K562 (cell line): ENCODE measurements at regions of chr1 and their contacts with region 1.

Region 1: GRCh38 chr1:201511941-201512539 is 5.1 kb upstream of the CSRP1 start:
- DNase-seq: peak in 1 of 4 experiments; percentile 37
- ATAC-seq: peak; percentile 16
- H3K4me3 ChIP-seq: no peak overlapping the region
- H3K27ac ChIP-seq: no peak overlapping the region
- H3K4me1 ChIP-seq: peaks cover 22 to 46% of the 10 kb centered on the region in 2 experiments
- H3K27me3 ChIP-seq: no peaks in the 10 kb centered on the region
- CTCF ChIP-seq: no peak
- EP300 ChIP-seq: no peak
- POLR2A ChIP-seq: no peak
- RAD21 ChIP-seq: no peak

Region 2: GRCh38 chr1:201170533-201171062 is 341.4 kb before region 1 on chr1:
- CTCF ChIA-PET with region 1: no interaction called
- POLR2A ChIA-PET with region 1: no interaction called
- in situ Hi-C with region 1: no loop called
- intact Hi-C with region 1: no loop called
- DNase-seq: peak; percentile 97 to 100 (median 100)
- ATAC-seq: peak; percentile 98
- H3K4me3 ChIP-seq: peak overlapping the region; percentile 53
- H3K27ac ChIP-seq: peak overlapping the region; percentile 72
- H3K4me1 ChIP-seq: peaks cover 15 to 32% of the 10 kb centered on the region in 2 experiments; a peak in 4 of 5 replicates
- H3K27me3 ChIP-seq: peaks cover 2% of the 10 kb centered on the region in 2 experiments; a peak in 1 of 5 replicates
- CTCF ChIP-seq: peak in 1 of 3 experiments; percentile 31; a peak in 1 of 6 replicates
- EP300 ChIP-seq: peak; percentile 56
- POLR2A ChIP-seq: peak; percentile 68; the same call in 1 of the 2 replicates
- RAD21 ChIP-seq: 0 out of 4 replicates have a peak, but pooled peaks of 1 of the 2 experiments have one; percentile 6

Region 3: DNA sequence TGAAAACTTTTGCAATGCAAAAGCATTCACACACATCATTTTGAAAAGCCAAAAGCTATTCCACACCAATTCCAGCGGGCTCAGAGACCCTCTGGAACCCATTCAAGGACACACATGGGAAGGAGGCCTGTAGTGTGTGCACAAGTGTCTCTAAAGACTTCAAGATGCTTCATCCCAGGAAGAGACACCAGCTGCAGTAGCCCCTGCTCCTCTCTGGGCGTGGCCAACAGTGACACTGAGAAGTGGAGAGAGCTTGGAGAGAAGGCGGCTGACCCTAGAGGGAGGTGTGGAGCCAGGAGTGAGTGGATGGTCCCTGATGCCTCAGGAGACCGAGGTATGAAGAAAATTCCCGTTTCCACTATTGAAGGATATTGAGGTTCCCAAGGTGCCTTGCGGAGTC is 75.6 kb before region 1 on chr1:
- CTCF ChIA-PET with region 1: interaction called, 30 read pairs
- POLR2A ChIA-PET with region 1: interaction called, 4 read pairs
- in situ Hi-C with region 1: no loop called
- intact Hi-C with region 1: no loop called
- DNase-seq: peak in 3 of 4 experiments; percentile 49 to 60 (median 56)
- ATAC-seq: peak; percentile 92
- H3K4me3 ChIP-seq: no peak overlapping the region
- H3K27ac ChIP-seq: no peak overlapping the region
- H3K4me1 ChIP-seq: peaks cover 0 to 4% of the 10 kb centered on the region in 2 experiments; a peak in 2 of 5 replicates
- H3K27me3 ChIP-seq: peaks cover 0 to 21% of the 10 kb centered on the region in 2 experiments; a peak in 3 of 5 replicates
- CTCF ChIP-seq: peak; percentile 50 to 53 (median 50); a peak in 5 of 6 replicates
- EP300 ChIP-seq: no peak
- POLR2A ChIP-seq: no peak
- RAD21 ChIP-seq: peak in 1 of 2 experiments; percentile 38; a peak in 2 of 4 replicates

Region 4: DNA sequence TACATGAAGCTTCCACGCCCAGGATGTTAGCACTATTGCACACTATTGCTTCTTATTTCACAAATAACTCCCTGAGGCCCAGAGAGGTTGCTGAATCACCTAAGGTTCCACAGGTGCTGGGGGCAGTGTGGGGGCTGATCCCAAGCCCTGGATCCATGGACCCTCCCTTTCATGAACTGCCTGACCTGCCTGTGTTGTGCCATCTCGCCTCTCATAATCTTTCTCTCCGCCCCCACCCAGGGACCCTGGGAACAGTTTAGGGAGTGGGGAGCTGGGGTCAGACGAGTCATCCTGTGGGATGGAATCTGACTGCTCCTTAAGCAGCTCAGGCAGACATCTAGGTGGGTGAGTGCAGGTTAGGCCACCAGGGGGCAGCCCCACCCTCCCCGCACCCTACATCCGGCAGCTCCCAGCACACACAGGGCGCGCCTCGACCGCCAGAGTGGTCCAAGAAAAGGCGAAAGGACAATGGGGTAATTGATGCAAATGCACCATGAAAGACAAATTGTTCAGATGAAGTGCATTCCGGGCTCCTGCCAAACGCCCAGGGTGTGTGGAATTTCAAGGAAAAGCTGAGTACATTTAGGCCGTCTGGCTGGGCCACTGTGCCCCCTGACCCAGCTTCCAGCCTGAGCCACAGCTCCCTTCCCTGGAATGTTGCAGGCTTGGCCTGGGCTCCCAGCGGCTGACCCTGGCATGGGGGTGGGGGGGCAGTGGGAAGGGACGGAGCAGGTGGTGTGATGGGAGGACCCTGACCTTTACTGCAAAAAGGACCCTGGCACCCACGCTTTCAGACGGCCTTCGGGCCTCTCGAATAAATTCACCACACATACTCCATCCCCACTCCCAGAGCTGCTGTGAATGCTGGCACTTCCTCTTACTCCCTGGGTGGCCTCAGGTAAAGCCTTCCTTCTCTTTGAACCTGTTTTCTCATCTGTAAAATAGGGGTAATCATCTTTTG is 63.8 kb before region 1 on chr1:
- CTCF ChIA-PET with region 1: interaction called, 44 read pairs
- POLR2A ChIA-PET with region 1: interaction called, 3 read pairs
- in situ Hi-C with region 1: loop called (anchors 5 kb)
- intact Hi-C with region 1: loop called (anchors 1 kb)
- DNase-seq: peak; percentile 86 to 94 (median 92)
- ATAC-seq: peak; percentile 100
- H3K4me3 ChIP-seq: no peak overlapping the region
- H3K27ac ChIP-seq: no peak overlapping the region
- H3K4me1 ChIP-seq: peaks cover 0 to 11% of the 10 kb centered on the region in 2 experiments; a peak in 3 of 5 replicates
- H3K27me3 ChIP-seq: peaks cover 8 to 20% of the 10 kb centered on the region in 2 experiments
- CTCF ChIP-seq: peak; percentile 93 to 95 (median 94)
- EP300 ChIP-seq: no peak
- POLR2A ChIP-seq: no peak
- RAD21 ChIP-seq: peak; percentile 89 to 97

Region 5: GRCh38 chr1:201500670-201501120 is 11.3 kb before region 1 on chr1:
- CTCF ChIA-PET with region 1: no interaction called
- POLR2A ChIA-PET with region 1: interaction called, 14 read pairs
- in situ Hi-C with region 1: no loop called
- intact Hi-C with region 1: no loop called
- DNase-seq: no peak
- ATAC-seq: no peak
- H3K4me3 ChIP-seq: no peak overlapping the region
- H3K27ac ChIP-seq: no peak overlapping the region
- H3K4me1 ChIP-seq: peaks cover 0 to 5% of the 10 kb centered on the region in 2 experiments; a peak in 3 of 5 replicates
- H3K27me3 ChIP-seq: peaks cover 0 to 20% of the 10 kb centered on the region in 2 experiments; a peak in 1 of 5 replicates
- CTCF ChIP-seq: no peak
- EP300 ChIP-seq: no peak
- POLR2A ChIP-seq: no peak
- RAD21 ChIP-seq: no peak